Activated CD4-positive, alpha-beta T cell treated with anti-CD3 and anti-CD28 coated beads for 36 hours (primary cell): ENCODE measurements at regions of chr2 and their contacts with region 1.

Region 1: DNA sequence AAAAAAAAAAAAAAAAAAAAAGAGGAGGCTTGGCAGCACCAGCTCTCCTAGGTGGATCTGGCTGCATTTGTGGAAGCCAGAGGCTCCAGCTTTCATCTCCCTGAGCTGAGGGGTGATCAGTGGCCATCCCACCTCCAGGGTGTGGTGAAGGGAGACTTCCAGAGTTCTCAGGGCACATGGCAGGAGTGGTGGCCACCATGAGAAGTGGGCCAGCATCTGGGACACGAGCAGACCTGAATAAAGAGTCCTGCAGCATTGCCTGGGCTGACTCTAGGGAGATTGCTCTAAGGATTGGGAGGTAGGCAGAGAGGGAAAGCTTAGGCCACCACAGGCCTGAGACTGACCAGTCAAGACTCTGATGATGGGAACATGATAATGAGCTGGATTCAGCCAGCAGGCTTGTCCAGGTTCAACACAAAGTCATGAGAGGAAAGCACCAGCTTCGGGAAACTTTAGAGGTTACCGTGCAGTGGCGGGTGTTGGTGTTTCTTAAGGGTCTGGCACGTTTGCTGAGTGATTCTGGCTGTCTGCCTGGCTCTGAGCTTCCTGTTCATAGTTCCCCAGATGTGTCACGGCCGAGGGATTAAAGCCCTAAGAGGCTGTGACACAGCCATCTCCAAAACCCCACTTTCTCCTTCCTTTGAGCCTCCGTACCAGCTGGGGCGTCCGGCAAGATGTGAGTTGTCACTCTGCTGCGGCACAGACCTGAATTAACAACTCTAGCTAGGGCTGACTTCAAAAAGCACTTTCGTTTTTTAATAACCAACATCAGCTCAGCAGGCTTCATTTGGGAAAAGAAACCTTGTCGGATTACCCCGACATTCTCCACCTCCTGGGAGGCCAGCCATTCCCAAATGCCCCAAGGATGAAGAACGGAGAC is 38.3 kb upstream of the IL1R1 start:
- DNase-seq: peak; percentile 92
- ATAC-seq: peak; percentile 78
- H3K4me3 Mint-ChIP-seq: peak overlapping the region; percentile 80
- H3K27ac Mint-ChIP-seq: peak overlapping the region; percentile 84
- H3K4me1 Mint-ChIP-seq: peaks cover 59% of the 10 kb centered on the region
- H3K27me3 Mint-ChIP-seq: peaks cover 11% of the 10 kb centered on the region

Region 2: GRCh38 chr2:102114290-102114721 is 10.1 kb after region 1 on chr2:
- CTCF ChIA-PET with region 1: interaction called, 5 read pairs
- POLR2A ChIA-PET with region 1: interaction called, 3 read pairs
- intact Hi-C with region 1: loop called in 1 of 2 experiments (anchors 1 kb)
- DNase-seq: peak; percentile 52
- ATAC-seq: peak; percentile 87
- H3K4me3 Mint-ChIP-seq: peak overlapping the region; percentile 1
- H3K27ac Mint-ChIP-seq: peak overlapping the region; percentile 55
- H3K4me1 Mint-ChIP-seq: peaks cover 86% of the 10 kb centered on the region
- H3K27me3 Mint-ChIP-seq: peaks cover 14% of the 10 kb centered on the region

Region 3: DNA sequence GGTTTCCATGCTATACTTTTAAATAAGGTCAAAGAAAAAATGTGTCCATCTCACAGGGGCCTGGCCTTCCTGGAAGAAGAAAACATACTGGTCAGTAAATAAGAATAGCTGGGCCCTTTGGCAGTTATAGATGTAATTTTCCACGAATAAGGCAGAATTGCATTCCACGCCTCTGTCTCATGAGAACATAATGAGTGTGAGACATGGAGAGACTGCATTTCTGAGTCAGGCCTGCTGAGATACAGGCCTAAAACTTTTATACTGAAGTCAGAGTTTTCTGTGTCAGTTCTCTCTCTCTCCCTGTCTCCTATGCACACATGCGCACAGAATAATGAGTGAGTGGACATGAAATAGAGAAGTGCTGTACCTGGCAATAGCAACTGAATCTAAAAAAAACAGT is 17.9 kb after region 1 on chr2:
- CTCF ChIA-PET with region 1: interaction called, 5 read pairs
- POLR2A ChIA-PET with region 1: interaction called, 4 read pairs
- intact Hi-C with region 1: loop called in 1 of 2 experiments (anchors 2 kb)
- DNase-seq: no peak
- ATAC-seq: peak; percentile 30
- H3K4me3 Mint-ChIP-seq: no peak overlapping the region
- H3K27ac Mint-ChIP-seq: no peak overlapping the region
- H3K4me1 Mint-ChIP-seq: peaks cover 41% of the 10 kb centered on the region
- H3K27me3 Mint-ChIP-seq: peaks cover 17% of the 10 kb centered on the region

Region 4: DNA sequence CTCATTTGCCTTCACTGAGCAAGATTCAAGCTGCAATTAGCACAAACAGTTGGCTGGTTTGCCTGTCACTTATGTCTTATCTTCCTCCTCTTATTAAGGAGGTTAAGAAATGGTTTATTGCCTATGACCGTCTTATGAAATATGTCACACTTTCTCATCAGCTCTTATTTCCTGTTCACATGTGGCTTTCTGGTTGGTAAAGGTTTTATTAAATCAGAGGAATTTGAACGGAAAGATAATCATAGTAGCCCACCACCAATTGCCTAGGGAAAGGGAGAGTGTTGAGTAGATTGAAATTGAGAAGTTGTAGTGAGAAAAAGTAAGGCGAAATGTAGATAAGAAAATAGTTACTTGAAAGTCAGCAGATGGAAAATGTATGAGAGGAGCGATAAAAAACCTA is 34.1 kb after region 1 on chr2:
- CTCF ChIA-PET with region 1: interaction called, 9 read pairs
- POLR2A ChIA-PET with region 1: interaction called, 4 read pairs
- intact Hi-C with region 1: loop called in 1 of 2 experiments (anchors 1 kb)
- DNase-seq: no peak
- ATAC-seq: peak; percentile 7
- H3K4me3 Mint-ChIP-seq: peak overlapping the region; percentile 7
- H3K27ac Mint-ChIP-seq: peak overlapping the region; percentile 89
- H3K4me1 Mint-ChIP-seq: peaks cover 64% of the 10 kb centered on the region
- H3K27me3 Mint-ChIP-seq: peaks cover 23% of the 10 kb centered on the region

Region 5: DNA sequence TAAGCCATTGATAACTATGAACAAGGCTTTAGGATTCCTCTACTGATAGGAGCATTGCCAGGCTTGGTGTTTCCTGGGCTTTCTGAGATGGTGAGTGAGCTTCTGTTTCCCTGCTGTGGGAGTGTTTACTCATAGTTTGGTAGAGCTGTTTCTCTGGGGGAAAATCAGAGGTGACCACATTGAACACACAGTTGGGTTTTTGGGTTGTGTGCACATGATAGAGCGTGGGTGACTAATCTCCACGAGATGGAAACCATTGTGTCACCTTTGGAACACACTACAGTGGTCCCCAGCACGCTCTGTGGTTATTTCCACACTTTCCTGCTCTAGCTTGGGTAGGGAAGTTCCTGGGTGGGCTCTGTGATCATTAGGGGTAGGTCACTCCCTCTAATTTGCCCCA is 43.7 kb after region 1 on chr2:
- CTCF ChIA-PET with region 1: no interaction called
- POLR2A ChIA-PET with region 1: no interaction called
- intact Hi-C with region 1: loop called (anchors 1 to 2 kb)
- DNase-seq: peak; percentile 81
- ATAC-seq: peak; percentile 87
- H3K4me3 Mint-ChIP-seq: no peak overlapping the region
- H3K27ac Mint-ChIP-seq: peak overlapping the region; percentile 89
- H3K4me1 Mint-ChIP-seq: peaks cover 26% of the 10 kb centered on the region
- H3K27me3 Mint-ChIP-seq: peaks cover 7% of the 10 kb centered on the region

Region 6: DNA sequence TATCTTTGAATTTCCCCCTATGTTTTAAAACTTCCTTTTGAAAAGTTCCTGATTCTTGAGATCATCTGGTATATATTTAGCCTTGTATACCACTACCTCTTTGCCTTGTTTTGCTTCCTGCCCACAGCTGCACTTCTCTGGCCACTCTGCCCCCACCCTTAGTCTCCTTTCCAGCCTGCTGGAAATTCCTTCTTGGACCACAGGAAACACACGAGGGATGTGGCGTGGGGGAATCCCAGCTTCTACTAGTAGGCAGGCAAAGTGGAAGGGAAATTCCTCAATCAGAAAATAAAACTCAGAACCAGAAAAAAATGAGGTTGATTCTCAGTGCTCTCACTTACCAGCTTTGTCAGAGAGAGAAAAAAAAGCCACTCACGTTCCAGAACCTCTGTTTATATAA is 332.1 kb after region 1 on chr2:
- CTCF ChIA-PET with region 1: no interaction called
- POLR2A ChIA-PET with region 1: no interaction called
- intact Hi-C with region 1: loop called (anchors 5 to 10 kb)
- DNase-seq: peak; percentile 38
- ATAC-seq: no peak
- H3K4me3 Mint-ChIP-seq: no peak overlapping the region
- H3K27ac Mint-ChIP-seq: peak overlapping the region; percentile 71
- H3K4me1 Mint-ChIP-seq: peaks cover 30% of the 10 kb centered on the region
- H3K27me3 Mint-ChIP-seq: no peaks in the 10 kb centered on the region

Region 7: DNA sequence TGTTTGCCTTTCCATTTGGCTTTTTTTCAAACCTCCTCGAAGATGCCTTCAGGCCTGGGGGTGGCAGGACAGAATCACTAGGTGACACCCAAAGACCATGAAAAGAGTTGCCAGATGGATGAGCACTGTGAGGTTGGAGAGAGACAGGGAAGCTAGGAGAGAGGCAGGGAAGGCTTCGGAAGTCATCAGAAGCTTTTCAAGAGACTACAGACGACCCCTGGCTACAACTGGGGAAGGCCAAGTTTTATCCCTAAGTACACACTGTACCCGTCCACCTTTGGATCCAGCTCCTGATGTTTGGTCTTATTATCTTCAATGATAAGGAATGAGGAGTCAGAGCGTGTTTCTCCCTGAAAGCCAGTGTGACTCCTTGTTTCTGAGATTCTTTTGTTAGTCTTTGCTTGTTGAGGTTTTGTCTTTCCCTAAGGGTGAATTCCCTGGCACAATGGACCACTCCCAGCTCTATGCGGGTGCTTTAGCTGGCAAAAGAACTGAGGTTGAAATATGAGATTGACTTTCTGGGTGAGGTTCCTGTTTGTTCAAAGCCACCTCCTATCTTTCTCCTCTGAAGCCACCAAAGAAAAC is 481.7 kb after region 1 on chr2:
- CTCF ChIA-PET with region 1: no interaction called
- POLR2A ChIA-PET with region 1: no interaction called
- intact Hi-C with region 1: no loop called
- DNase-seq: no peak
- ATAC-seq: no peak
- H3K4me3 Mint-ChIP-seq: no peak overlapping the region
- H3K27ac Mint-ChIP-seq: no peak overlapping the region
- H3K4me1 Mint-ChIP-seq: peaks cover 9% of the 10 kb centered on the region
- H3K27me3 Mint-ChIP-seq: peaks cover 5% of the 10 kb centered on the region